ENCODE measurements at regions of chr15 and their contacts with region 1.

Region 1: GRCh38 chr15:52496776-52497470 is 31.8 kb downstream of the MYO5A start:
- DNase-seq: peak; percentile 62
- H3K4me3 ChIP-seq: no peak overlapping the region
- H3K27ac ChIP-seq: peak overlapping the region; percentile 27
- H3K4me1 ChIP-seq: peaks cover 59% of the 10 kb centered on the region
- H3K27me3 ChIP-seq: no peaks in the 10 kb centered on the region
- CTCF ChIP-seq: no peak
- POLR2A ChIP-seq: no peak

Region 2: GRCh38 chr15:51846463-51847230 is 650.3 kb before region 1 on chr15:
- CTCF ChIA-PET with region 1: no interaction called
- POLR2A ChIA-PET with region 1: no interaction called
- dilution Hi-C with region 1: no loop called
- intact Hi-C with region 1: no loop called
- DNase-seq: peak; percentile 97
- H3K4me3 ChIP-seq: peak overlapping the region in 1 of 3 experiments; percentile 24
- H3K27ac ChIP-seq: peak overlapping the region; percentile 93
- H3K4me1 ChIP-seq: peaks cover 71% of the 10 kb centered on the region
- H3K27me3 ChIP-seq: no peaks in the 10 kb centered on the region
- CTCF ChIP-seq: no peak
- POLR2A ChIP-seq: no peak

Region 3: DNA sequence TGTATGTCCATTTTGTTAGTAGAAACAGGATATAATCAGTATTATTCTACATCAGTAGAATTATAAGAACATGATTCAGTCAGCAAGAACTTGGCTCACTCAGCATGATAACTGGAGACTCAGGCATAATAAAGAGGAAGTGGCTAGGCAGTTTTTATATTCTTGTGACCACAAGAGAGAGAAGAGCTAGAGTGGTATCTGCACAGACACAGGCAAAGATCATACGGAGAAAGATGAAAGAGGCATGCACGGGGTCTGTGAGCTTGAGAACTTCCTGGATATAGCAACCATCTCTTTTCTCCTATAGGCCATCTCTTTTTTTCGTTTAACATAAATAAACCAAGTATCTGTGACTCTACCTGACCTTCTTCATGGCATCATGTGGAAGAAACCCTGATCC is 15.0 kb before region 1 on chr15:
- CTCF ChIA-PET with region 1: interaction called, 4 read pairs
- POLR2A ChIA-PET with region 1: no interaction called
- dilution Hi-C with region 1: no loop called
- intact Hi-C with region 1: loop called (anchors 2 kb)
- DNase-seq: peak; percentile 75
- H3K4me3 ChIP-seq: no peak overlapping the region
- H3K27ac ChIP-seq: peak overlapping the region; percentile 92
- H3K4me1 ChIP-seq: peaks cover 63% of the 10 kb centered on the region
- H3K27me3 ChIP-seq: no peaks in the 10 kb centered on the region
- CTCF ChIP-seq: no peak
- POLR2A ChIP-seq: peak; percentile 44

Region 4: DNA sequence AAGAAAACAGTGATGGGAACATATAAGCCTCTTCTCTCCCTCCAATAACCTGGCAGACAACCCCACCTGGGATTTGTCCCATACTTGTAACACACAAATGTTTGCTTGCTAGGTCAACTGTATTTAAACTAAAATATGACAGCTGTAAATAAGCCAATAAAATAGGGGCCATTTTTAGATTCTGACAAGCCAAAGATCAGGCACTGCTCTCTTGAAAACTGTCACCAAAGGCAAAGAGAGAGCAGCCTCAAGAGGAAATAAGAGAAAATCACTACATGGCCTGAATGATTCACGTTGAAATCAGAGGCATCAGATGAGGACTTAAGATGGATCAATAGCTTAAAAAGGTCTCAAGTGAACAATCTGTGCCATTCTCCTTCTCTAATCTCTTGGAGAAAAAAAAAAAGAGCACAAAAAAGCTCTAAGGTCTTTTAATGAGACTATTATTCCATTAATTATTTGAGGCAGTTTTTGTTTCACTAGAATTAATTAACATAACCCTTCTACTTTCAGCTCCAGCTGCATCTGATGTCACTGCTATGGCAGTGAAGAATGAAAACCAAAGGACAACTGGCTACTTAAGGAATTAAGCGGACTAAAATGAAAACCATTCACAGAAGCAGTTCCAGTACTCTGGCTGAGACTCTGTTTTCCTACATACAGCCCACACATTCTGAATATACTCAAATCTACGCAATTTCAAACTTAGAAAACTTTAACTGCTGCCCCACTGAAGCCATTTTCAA is 12.8 kb after region 1 on chr15:
- CTCF ChIA-PET with region 1: interaction called, 4 read pairs
- POLR2A ChIA-PET with region 1: no interaction called
- dilution Hi-C with region 1: no loop called
- intact Hi-C with region 1: loop called (anchors 1 kb)
- DNase-seq: no peak
- H3K4me3 ChIP-seq: no peak overlapping the region
- H3K27ac ChIP-seq: no peak overlapping the region
- H3K4me1 ChIP-seq: no peaks in the 10 kb centered on the region
- H3K27me3 ChIP-seq: no peaks in the 10 kb centered on the region
- CTCF ChIP-seq: no peak
- POLR2A ChIP-seq: no peak

Region 5: GRCh38 chr15:52517014-52517413 is 20.1 kb after region 1 on chr15:
- CTCF ChIA-PET with region 1: no interaction called
- POLR2A ChIA-PET with region 1: interaction called, 3 read pairs
- dilution Hi-C with region 1: no loop called
- intact Hi-C with region 1: loop called (anchors 2 kb)
- DNase-seq: no peak
- H3K4me3 ChIP-seq: no peak overlapping the region
- H3K27ac ChIP-seq: no peak overlapping the region
- H3K4me1 ChIP-seq: peaks cover 2% of the 10 kb centered on the region
- H3K27me3 ChIP-seq: no peaks in the 10 kb centered on the region
- CTCF ChIP-seq: no peak
- POLR2A ChIP-seq: no peak

Region 6: DNA sequence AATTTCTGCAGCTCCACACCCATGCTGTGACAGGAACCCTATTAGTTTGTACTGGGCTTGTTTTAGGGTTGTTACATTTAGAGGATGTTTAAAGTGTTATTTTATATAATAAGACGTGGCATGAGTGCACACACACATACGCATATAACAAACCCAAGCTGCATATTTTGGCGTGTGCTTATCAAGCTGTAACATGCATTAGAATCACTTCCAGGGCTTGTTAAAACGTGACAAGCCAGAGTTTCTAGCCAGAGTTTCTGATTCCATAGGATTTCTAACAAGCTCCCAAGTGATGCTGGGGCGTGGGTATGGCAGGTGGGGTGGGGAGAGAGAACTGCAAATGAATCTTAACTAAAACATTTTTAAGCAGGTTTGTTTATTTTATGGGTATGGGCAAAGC is 275.8 kb after region 1 on chr15:
- CTCF ChIA-PET with region 1: no interaction called
- POLR2A ChIA-PET with region 1: no interaction called
- dilution Hi-C with region 1: no loop called
- intact Hi-C with region 1: no loop called
- DNase-seq: no peak
- H3K4me3 ChIP-seq: no peak overlapping the region
- H3K27ac ChIP-seq: no peak overlapping the region
- H3K4me1 ChIP-seq: no peaks in the 10 kb centered on the region
- H3K27me3 ChIP-seq: peaks cover 21 to 28% of the 10 kb centered on the region in 2 experiments
- CTCF ChIP-seq: no peak
- POLR2A ChIP-seq: no peak

Measured in endothelial cell of umbilical vein (primary cell).